ENCODE measurements at regions of chr7 and their contacts with region 1.

Region 1: DNA sequence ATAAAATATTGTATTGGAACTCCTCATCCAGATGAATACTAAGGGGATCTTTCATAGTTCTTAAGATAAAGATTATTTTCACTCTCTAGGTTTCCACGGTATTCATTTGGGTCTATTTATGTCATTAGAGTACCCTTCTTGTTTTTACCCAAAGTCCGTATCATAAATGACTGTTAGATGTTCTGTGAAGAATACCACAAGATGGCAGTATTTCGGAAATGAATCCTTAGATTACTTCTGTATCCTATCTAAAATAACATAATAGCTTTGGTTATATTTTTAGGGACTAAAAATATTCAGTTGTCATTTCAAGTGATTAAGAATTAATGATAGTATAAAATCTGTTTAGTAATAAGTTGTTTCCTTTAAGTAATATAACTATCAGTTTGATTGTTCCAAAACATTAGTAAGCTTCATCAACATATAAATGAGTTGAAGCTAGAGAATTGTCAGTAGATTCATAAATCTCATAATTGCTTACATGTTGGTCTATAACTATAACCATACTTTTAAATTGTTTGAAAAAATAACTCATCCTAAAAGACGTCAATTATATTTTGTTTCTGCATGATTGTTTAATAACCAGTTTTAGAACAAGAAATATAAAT is 337.5 kb upstream of the KCND2 start:
- DNase-seq: no peak
- ATAC-seq: no peak
- H3K4me3 Mint-ChIP-seq: no peak overlapping the region
- H3K27ac Mint-ChIP-seq: no peak overlapping the region
- H3K4me1 Mint-ChIP-seq: no peaks in the 10 kb centered on the region
- H3K27me3 Mint-ChIP-seq: no peaks in the 10 kb centered on the region

Region 2: GRCh38 chr7:120272261-120272660 is 336.7 kb after region 1 on chr7:
- CTCF ChIA-PET with region 1: no interaction called
- POLR2A ChIA-PET with region 1: no interaction called
- intact Hi-C with region 1: loop called in 1 of 2 experiments (anchors 5 kb)
- DNase-seq: peak; percentile 22
- ATAC-seq: no peak
- H3K4me3 Mint-ChIP-seq: no peak overlapping the region
- H3K27ac Mint-ChIP-seq: no peak overlapping the region
- H3K4me1 Mint-ChIP-seq: peaks cover 7% of the 10 kb centered on the region
- H3K27me3 Mint-ChIP-seq: peaks cover 30% of the 10 kb centered on the region

Region 3: DNA sequence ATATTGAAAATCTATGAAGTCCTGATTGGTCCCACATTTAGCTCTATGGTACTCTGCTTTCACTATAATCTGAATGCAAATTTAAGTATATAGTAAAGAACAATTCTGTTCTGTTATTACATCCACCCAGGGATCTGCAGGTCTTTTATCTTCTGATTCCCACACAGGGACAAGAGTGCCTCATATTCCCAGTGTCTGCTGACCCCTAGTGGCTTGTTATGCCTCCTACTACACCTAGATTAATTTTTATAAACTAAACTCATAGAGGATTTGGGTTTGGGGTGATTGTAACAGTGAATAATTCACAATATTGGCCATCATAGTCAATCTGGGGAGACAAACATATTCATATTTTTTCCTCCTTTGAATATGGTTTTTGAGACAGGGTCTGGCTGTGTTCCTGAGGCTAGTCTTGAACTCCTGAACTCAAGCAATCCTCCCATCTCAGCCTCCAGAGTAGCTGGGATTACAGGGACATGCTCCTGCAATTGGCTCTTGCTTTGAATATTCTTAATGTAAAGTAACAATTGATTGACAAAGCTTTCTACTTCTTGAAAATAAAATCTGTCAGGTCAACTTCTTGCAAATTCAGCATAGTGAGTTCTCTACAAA is 619.5 kb after region 1 on chr7:
- CTCF ChIA-PET with region 1: no interaction called
- POLR2A ChIA-PET with region 1: no interaction called
- intact Hi-C with region 1: loop called in 1 of 2 experiments (anchors 10 kb)
- DNase-seq: peak; percentile 40
- ATAC-seq: peak; percentile 39
- H3K4me3 Mint-ChIP-seq: no peak overlapping the region
- H3K27ac Mint-ChIP-seq: no peak overlapping the region
- H3K4me1 Mint-ChIP-seq: no peaks in the 10 kb centered on the region
- H3K27me3 Mint-ChIP-seq: no peaks in the 10 kb centered on the region

Region 4: GRCh38 chr7:120725376-120726039 is 790.0 kb after region 1 on chr7:
- CTCF ChIA-PET with region 1: no interaction called
- POLR2A ChIA-PET with region 1: no interaction called
- intact Hi-C with region 1: loop called in 1 of 2 experiments (anchors 2 kb)
- DNase-seq: no peak
- ATAC-seq: no peak
- H3K4me3 Mint-ChIP-seq: no peak overlapping the region
- H3K27ac Mint-ChIP-seq: no peak overlapping the region
- H3K4me1 Mint-ChIP-seq: no peaks in the 10 kb centered on the region
- H3K27me3 Mint-ChIP-seq: peaks cover 11% of the 10 kb centered on the region